Ascending aorta (tissue), 2 donors: ENCODE measurements at regions of chr3 and their contacts with region 1.

Region 1: DNA sequence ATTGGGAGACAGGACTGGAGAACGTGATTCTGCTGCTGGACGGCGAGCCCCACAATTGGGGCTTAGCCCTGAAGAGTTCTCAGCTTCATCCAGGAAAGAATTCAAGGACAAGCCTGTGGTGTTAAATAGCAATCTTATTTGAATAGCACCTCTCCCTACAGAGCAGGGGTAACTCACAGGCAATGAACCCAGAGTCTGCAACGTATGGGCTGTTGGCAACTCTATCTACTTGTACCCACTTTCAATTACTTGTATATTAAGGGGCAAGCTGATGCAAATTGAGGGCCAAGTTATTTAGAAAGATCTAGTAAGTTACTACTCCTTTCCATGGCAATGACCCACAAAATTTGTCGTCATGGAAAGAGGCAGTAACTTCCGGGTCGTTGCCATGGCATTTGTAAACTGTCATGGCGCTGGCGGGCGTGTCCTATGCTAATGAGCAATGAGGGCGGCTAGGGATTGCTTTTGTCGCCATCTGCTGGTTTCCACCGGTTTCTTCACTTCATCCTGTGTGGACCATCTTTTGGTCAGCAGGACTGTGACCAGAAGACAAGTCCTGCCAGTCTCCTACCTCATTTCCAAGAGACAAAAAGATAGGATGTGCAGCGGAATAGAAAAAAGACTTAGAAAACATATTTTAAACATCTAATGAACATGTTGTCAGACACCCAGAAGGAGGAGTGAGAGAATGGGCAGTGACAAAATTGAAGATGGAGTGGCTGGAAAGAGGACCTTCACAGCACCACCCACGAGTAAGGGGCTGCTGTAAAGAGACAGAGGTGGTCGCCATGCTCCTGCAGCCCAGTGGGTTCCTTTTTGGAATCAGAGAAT is 45.8 kb upstream of the SH3BP5 start:
- DNase-seq: peak; percentile 89 to 98
- H3K4me3 ChIP-seq: no peak overlapping the region
- H3K27ac ChIP-seq: peak overlapping the region; percentile 61 to 66
- H3K4me1 ChIP-seq: peaks cover 0 to 2% of the 10 kb centered on the region in 2 donors
- H3K27me3 ChIP-seq: no peaks in the 10 kb centered on the region
- CTCF ChIP-seq: peak; percentile 81 to 96 (median 85)

Region 2: DNA sequence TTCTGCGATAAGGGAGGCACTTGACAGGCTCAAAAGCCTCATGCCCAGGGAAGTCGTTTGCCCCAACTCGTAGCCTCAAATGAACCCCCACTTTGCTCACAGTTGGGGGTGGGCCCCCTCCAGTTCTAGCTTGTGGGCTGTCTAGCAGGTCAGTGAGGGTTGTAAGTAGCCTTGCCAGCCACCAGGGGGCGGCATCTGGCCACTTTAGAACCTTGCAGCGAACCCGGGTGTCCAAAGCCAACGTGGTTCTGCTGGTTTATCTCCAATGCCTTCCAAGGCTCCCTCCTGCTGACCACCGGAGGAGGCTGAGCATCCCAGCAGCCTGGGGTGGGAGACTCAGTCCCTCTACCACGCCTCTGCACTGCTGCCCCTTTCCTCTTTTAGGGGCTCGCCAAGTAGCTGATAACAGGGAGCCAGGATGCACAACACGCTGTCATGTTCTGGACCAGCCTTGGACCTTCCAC is 270.1 kb before region 1 on chr3:
- intact Hi-C with region 1: loop called (anchors 10 kb)
- DNase-seq: peak in 1 of 2 donors; percentile 75
- H3K4me3 ChIP-seq: no peak overlapping the region
- H3K27ac ChIP-seq: no peak overlapping the region
- H3K4me1 ChIP-seq: no peaks in the 10 kb centered on the region
- H3K27me3 ChIP-seq: no peaks in the 10 kb centered on the region
- CTCF ChIP-seq: peak; percentile 71 to 93 (median 87)

Region 3: GRCh38 chr3:15332405-15333098 is 45.6 kb before region 1 on chr3 and contains the start of gene SH3BP5:
- intact Hi-C with region 1: loop called (anchors 1 kb)
- DNase-seq: peak in 1 of 2 donors; percentile 84
- H3K4me3 ChIP-seq: peak within 1 kb of the TSS; percentile 95 to 99
- H3K27ac ChIP-seq: peak within 1 kb of the TSS; percentile 92 to 94
- H3K4me1 ChIP-seq: peaks cover 0 to 16% of the 10 kb centered on the region in 2 donors
- H3K27me3 ChIP-seq: no peaks in the 10 kb centered on the region
- CTCF ChIP-seq: peak; percentile 62 to 92 (median 83)
- total RNA-seq, gene SH3BP5: 65.9 TPM

Region 4: GRCh38 chr3:15405448-15406050 is 27.4 kb after region 1 on chr3:
- intact Hi-C with region 1: no loop called
- DNase-seq: no peak
- H3K4me3 ChIP-seq: no peak overlapping the region
- H3K27ac ChIP-seq: no peak overlapping the region
- H3K4me1 ChIP-seq: no peaks in the 10 kb centered on the region
- H3K27me3 ChIP-seq: no peaks in the 10 kb centered on the region
- CTCF ChIP-seq: peak; percentile 28 to 55 (median 30)

Region 5: DNA sequence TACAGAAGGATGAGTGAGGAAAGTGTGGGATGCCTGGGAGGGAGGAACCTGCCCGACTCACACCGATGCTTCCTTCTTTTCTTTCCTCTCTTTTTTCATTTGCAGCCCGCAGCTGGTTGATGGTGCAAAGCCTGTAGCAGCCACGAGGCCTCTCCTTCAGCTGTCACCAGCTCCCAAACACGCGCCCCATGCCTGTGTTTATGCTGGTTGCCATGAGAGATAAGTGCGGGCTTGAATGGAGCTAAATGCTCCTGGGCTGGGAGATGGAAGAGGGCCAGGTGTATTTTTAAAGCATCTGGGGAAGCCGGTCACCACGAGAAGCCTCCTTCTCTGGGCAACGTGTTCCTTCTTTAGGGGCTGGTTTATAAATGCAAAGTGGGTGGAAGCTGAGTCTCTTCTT is 134.0 kb after region 1 on chr3:
- intact Hi-C with region 1: no loop called
- DNase-seq: no peak
- H3K4me3 ChIP-seq: no peak overlapping the region
- H3K27ac ChIP-seq: peak overlapping the region in 1 of 2 donors; percentile 7
- H3K4me1 ChIP-seq: no peaks in the 10 kb centered on the region
- H3K27me3 ChIP-seq: no peaks in the 10 kb centered on the region
- CTCF ChIP-seq: peak in 1 of 3 experiments; percentile 21